ENCODE measurements at regions of chr9 and their contacts with region 1.

Region 1: GRCh38 chr9:32378993-32379729 is 5.3 kb upstream of the ACO1 start:
- DNase-seq: no peak
- H3K4me3 ChIP-seq: no peak overlapping the region
- CTCF ChIP-seq: peak; percentile 79

Region 2: DNA sequence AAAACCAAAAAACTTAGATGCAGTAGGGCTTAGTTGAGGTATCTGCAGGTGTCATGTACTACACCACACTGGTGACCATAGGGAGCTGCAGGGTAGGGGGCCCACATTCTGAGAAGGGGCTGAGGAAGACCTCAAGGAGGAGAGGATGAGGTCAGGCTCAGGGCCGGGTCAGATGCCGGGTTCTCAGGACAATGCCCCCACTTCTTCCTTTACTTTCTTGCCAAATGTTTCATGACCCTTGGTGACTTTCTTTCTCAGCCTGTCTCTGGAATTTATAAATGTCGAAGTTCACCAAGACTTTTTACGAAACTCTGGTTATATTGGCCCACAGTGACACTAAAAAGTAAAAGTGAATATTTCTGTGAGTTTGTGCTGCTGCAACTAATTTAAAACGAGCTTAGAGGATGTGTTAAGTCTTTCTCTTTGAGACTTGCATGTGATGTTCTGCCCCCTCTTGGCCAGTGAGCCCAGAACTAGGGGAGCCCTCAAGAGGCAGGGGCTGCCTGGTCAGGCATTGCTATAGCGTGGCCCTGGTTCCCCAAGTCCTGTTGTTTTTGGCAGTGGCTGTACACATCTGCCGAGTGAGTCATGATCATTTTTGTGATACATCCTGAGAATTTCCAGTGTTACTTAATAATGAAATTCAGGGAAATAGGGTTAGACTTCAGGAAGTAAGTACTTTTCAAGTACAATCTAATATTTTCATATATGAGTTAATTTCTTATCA is 16.5 kb after region 1 on chr9:
- CTCF ChIA-PET with region 1: interaction called, 32 read pairs
- POLR2A ChIA-PET with region 1: interaction called, 12 read pairs
- DNase-seq: peak; percentile 76
- H3K4me3 ChIP-seq: no peak overlapping the region
- CTCF ChIP-seq: peak; percentile 57

Region 3: GRCh38 chr9:32431940-32432555 is 52.9 kb after region 1 on chr9:
- CTCF ChIA-PET with region 1: interaction called, 233 read pairs
- POLR2A ChIA-PET with region 1: interaction called, 5 read pairs
- DNase-seq: no peak
- H3K4me3 ChIP-seq: no peak overlapping the region
- CTCF ChIP-seq: peak; percentile 53

Region 4: GRCh38 chr9:32526041-32526706 is 147.0 kb after region 1 on chr9 and contains the start of gene RIGI:
- CTCF ChIA-PET with region 1: interaction called, 71 read pairs
- POLR2A ChIA-PET with region 1: interaction called, 3 read pairs
- DNase-seq: peak; percentile 46
- H3K4me3 ChIP-seq: peak within 1 kb of the TSS; percentile 76
- CTCF ChIP-seq: peak; percentile 25

Region 5: DNA sequence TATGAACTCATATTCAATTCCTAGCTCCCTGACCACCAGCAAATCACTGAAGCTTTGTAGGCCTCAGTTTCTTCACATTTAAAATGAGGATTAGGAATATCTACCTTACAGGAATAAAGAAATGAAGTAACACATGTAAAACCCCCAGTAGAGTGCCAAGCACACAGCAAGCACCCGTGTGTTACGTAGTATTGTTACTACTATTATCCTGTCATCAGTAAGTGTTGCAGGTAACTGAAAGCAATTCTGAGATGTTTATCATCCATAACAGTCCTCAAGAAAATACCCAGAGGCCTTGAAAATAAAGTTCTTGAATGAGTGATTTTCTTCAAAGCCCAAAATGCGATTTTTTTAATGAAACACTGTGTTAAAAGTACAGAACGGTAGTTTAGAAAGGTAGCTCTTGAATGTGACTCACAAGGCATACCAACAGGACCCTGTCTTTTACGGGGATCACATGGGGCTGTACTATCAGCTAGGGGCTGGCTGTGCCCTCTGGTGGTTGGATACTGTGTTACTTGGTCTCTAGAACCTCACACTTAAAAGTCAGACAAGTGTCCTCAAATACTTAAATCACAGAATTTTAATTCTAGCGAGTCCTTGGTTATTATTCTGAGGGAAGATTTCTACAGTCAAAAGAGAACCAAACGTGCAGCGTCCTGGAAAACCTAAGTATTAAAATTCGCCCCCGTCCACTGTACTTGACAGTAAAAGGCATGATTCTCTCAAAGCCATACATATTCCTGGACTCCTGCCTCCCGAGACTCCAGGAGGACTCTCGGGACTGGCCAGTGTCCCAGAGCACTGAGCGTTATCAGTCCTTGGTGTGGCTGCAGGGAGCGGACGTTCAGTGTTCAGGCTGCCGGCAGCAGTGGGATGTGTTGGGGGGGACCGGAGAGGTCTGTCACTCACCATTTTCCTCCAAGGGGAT is 193.1 kb after region 1 on chr9:
- CTCF ChIA-PET with region 1: interaction called, 1,093 read pairs
- POLR2A ChIA-PET with region 1: interaction called, 9 read pairs
- DNase-seq: no peak
- H3K4me3 ChIP-seq: peak overlapping the region; percentile 98
- CTCF ChIP-seq: peak; percentile 75

Region 6: DNA sequence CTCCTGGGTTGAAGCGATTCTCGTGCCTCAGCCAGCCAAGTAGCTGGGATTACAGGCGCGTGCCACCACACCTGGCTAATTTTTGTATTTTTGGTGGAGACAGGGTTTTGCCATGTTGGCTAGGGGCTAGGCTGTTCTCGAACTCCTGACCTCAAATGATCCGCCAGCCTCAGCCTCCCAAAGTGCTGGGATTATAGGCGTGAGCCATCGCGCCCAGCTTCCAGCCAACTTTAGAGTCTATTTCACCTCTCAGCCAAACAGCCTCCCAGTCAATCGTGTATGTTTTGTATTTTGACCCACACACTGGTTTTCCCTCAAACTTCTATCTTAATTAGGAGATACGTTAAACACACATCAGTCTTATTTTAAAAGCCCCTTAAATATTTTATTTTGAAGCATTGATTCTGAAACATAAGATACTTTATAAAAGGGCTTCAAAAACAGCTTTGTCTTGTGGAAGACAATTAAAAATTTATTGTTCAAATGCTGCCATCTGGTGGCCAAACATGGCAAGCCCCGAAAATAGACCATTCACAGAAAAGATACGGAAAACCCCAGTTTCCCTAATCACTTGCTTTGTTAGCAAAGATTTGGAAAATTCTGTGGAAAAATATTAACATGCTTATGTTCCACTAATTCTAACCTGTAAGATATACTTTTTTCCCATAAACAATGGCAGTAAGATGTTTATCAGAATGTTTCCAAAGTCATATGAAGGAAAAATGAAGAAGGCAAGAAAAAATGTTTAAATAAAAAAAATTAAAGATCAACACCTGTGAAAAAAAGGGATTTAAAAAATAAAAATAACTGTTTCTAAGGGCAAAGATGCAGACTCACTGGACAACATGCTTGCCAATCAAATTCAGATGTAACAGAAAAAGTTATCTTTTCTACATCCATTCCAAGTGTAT is 589.2 kb after region 1 on chr9:
- CTCF ChIA-PET with region 1: interaction called, 186 read pairs
- POLR2A ChIA-PET with region 1: interaction called, 3 read pairs
- DNase-seq: no peak
- H3K4me3 ChIP-seq: no peak overlapping the region
- CTCF ChIP-seq: peak; percentile 51

Measured in AG04449 (cell line).